HepG2 (cell line): ENCODE measurements at regions of chr6 and their contacts with region 1.

Region 1: GRCh38 chr6:100353276-100354015 is 111.3 kb downstream of the SIM1 start:
- DNase-seq: no peak
- ATAC-seq: no peak
- H3K4me3 ChIP-seq: no peak overlapping the region
- H3K27ac ChIP-seq: no peak overlapping the region
- H3K4me1 ChIP-seq: no peaks in the 10 kb centered on the region
- H3K27me3 ChIP-seq: no peaks in the 10 kb centered on the region
- CTCF ChIP-seq: no peak
- EP300 ChIP-seq: no peak
- POLR2A ChIP-seq: no peak
- RAD21 ChIP-seq: no peak

Region 2: DNA sequence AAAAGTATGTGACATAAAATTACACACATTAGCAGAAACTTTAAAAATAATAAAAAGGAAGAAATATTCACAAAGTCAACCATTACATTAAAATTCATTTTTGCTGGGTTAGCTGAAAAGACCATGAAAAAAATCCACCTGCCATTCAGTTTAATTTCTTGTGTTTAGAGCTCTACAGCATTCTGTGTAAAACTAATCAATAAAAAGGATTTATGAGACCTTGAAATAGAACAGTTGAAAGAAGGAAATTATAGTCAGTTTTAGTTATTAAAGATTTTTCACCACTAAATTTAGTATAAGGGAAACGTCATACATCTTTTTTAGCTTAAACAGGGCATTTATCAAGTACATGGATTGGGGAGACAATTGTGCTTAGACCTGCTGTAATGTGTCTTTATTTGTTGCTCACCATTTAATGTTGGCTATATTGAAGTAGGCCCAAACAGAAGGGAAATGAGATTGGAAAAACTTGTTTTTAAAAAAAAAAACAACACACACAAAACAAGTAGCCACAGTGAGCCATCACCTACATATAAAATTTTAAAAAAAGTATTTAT is 1957.8 kb before region 1 on chr6:
- CTCF ChIA-PET with region 1: no interaction called
- POLR2A ChIA-PET with region 1: no interaction called
- in situ Hi-C with region 1: no loop called
- intact Hi-C with region 1: loop called (anchors 10 kb)
- DNase-seq: no peak
- ATAC-seq: no peak
- H3K4me3 ChIP-seq: no peak overlapping the region
- H3K27ac ChIP-seq: no peak overlapping the region
- H3K4me1 ChIP-seq: no peaks in the 10 kb centered on the region
- H3K27me3 ChIP-seq: no peaks in the 10 kb centered on the region
- CTCF ChIP-seq: no peak
- EP300 ChIP-seq: no peak
- POLR2A ChIP-seq: no peak
- RAD21 ChIP-seq: no peak